ENCODE measurements at regions of chr9 and their contacts with region 1.

Region 1: GRCh38 chr9:78601957-78602565 is 305.1 kb downstream of the PSAT1 start:
- DNase-seq: peak; percentile 12
- ATAC-seq: peak; percentile 45; the same call in 2 of the 3 replicates
- H3K4me3 ChIP-seq: no peak overlapping the region
- H3K27ac ChIP-seq: no peak overlapping the region
- H3K4me1 ChIP-seq: no peaks in the 10 kb centered on the region
- H3K27me3 ChIP-seq: peaks cover 0 to 11% of the 10 kb centered on the region in 2 experiments; a peak in 2 of 5 replicates
- CTCF ChIP-seq: peak; percentile 68
- EP300 ChIP-seq: no peak
- POLR2A ChIP-seq: no peak
- RAD21 ChIP-seq: no peak

Region 2: DNA sequence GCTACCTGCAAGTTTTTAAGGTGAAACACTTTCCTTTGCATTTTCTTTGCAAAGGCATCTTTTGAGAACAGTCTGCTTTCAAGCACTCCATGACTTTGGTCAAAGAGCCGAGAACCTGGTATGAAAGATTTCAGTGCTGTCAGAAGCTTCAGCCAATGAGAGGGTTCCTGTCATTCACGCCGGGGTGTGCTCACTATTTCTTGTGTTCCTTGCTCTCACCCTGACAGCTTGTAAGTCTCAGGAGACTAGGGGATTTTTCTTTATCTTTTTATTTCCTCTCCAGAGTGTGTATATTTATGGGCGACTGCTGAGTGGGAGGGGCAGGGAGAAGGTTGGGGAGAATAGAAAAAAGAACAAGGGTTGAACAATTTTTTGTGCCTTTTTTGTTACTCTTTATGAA is 28.9 kb after region 1 on chr9:
- CTCF ChIA-PET with region 1: no interaction called
- POLR2A ChIA-PET with region 1: no interaction called
- in situ Hi-C with region 1: no loop called
- intact Hi-C with region 1: no loop called
- DNase-seq: no peak
- ATAC-seq: no peak
- H3K4me3 ChIP-seq: no peak overlapping the region
- H3K27ac ChIP-seq: no peak overlapping the region
- H3K4me1 ChIP-seq: no peaks in the 10 kb centered on the region
- H3K27me3 ChIP-seq: no peaks in the 10 kb centered on the region
- CTCF ChIP-seq: no peak
- EP300 ChIP-seq: no peak
- POLR2A ChIP-seq: no peak
- RAD21 ChIP-seq: no peak

Region 3: DNA sequence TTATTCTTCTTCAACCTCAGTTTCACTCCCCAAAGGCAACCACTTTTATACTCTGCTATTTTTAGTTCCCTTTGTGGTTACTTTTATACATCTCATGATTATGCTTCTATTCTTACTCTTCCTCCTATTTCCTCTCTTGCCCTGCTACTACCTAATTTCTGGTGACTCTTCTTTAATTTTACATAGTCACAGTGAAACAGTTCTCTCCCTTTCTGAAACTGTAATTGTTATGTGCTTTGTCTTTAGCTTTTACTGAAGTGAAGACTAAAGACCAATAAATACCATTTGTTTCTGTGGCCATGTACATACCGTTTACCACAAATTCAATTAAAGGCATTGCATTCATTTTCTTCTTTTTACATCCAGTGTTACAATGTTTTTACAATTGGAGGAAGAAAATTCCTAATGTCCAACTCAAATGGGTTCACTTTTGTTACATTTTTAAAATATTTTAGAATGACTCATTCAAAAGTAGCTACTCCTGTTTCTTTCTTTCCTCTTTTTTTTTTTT is 105.5 kb after region 1 on chr9:
- CTCF ChIA-PET with region 1: no interaction called
- POLR2A ChIA-PET with region 1: no interaction called
- in situ Hi-C with region 1: no loop called
- intact Hi-C with region 1: loop called (anchors 5 kb)
- DNase-seq: no peak
- ATAC-seq: no peak
- H3K4me3 ChIP-seq: no peak overlapping the region
- H3K27ac ChIP-seq: no peak overlapping the region
- H3K4me1 ChIP-seq: no peaks in the 10 kb centered on the region
- H3K27me3 ChIP-seq: no peaks in the 10 kb centered on the region
- CTCF ChIP-seq: no peak
- EP300 ChIP-seq: no peak
- POLR2A ChIP-seq: no peak
- RAD21 ChIP-seq: no peak

Region 4: DNA sequence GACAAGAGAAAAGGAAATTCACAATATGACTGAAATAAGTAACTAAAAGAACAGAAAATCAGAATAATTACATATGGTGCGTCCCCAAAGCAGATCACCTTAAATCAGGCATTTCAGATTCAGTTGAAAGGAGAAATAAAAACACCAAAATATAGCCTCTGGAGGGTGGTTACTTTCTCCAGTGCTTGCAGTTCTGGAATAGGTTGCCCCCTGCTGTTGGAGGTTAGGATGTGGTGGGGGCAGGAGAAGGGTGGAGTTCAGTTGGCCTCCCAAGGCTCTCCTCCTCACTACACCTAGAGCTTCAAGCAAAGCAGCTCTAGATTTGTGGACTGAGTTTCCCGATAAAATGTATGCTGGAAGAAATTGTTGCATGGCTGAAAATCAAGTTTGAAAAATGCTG is 631.5 kb after region 1 on chr9:
- CTCF ChIA-PET with region 1: no interaction called
- POLR2A ChIA-PET with region 1: no interaction called
- in situ Hi-C with region 1: no loop called
- intact Hi-C with region 1: loop called (anchors 2 kb)
- DNase-seq: peak; percentile 33
- ATAC-seq: peak; percentile 90
- H3K4me3 ChIP-seq: no peak overlapping the region
- H3K27ac ChIP-seq: no peak overlapping the region
- H3K4me1 ChIP-seq: no peaks in the 10 kb centered on the region
- H3K27me3 ChIP-seq: no peaks in the 10 kb centered on the region
- CTCF ChIP-seq: peak; percentile 54
- EP300 ChIP-seq: no peak
- POLR2A ChIP-seq: no peak
- RAD21 ChIP-seq: no peak

Measured in HepG2 (cell line).